Right ventricle myocardium inferior (tissue), 1 donor: ENCODE measurements at regions of chr3 and their contacts with region 1.

Region 1: DNA sequence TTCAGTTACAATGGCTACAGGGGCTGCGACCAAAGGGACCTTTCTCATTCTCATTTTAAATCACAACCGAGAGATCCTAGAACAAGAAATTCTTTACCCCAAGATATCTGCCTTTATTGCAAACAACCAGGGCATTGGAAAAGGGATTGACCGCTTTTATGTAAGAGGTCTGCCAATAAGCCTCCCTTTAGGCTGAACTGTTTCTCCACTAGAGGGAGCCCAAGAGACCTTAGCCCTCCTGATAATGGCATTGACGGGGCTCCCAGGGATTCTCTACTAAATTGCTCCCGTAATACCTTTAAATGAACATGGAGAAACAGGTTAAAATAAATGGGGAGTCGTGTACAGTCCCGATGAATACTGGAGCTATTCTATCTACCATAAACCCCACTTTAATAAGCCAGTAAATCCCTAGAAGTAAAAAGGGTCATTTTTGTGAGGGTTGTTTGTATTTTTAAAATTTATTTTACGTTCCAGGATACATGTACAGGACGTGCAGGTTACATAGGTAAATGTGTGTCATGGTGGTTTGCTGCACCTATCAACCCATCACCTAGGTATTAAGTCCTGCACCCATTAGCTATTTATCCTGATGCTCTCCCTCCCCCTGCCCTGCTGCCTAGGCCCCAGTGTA is 7.5 kb upstream of the IGSF10 start:
- DNase-seq: no peak
- ATAC-seq: peak; percentile 63

Region 2: DNA sequence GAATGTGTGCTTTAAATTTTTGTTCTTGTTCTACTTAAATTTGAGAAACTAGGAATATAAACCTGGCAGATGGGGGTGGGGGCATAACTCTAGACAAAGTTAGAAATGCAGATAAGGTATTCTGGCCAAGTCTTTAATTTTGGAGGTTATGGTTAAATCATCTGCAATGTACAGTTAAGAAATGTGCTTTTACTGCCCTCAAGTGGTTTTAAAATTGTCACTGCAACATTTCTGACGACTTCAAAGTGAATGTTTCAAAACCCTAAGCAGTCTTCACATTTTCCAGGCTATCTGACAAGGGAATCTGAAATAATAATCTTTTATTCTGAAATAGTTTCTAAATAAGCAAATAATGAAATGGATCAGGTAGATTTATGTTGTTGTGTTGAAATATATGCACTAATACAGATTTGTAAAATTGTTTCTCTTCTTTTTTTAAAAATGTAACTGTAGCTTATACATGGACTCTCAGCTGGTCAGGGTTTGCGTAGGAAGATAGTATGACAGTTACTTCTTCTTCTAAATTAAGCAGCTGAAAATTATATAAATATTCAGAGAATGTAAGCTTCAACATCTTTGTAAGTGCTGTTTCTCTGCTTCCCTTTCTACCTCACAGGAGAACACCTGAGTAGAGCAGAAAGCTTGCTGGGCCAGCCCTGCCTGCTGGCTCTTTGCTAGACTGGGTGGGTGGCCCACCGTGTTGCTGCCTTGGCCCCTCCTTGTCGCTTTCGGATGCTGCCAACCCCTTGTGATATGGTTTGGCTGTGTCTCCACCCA is 450.0 kb after region 1 on chr3:
- intact Hi-C with region 1: loop called (anchors 2 kb)
- DNase-seq: no peak
- ATAC-seq: no peak